GM12878 (cell line): ENCODE measurements at regions of chr6 and their contacts with region 1.

Region 1: DNA sequence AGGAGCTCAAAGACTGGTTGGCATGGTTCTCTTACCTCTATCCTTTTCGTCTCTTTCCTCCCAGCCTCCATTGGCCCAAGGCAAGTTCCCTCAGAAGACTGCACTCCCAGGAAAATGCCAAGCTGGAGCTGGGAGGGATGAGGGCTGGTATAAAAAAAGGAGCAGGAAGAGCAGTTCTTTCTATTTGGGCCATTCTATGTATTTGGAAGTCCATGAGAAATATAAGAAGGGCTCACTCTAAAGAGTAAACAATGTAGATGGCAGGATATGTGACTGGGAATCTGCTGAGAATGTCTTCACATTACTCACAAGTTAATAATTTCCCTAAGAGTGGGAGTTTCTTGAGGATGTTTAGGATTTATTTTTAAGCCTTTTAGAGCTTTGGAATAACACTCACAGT is 36.6 kb upstream of the ADTRP start:
- DNase-seq: no peak
- ATAC-seq: no peak
- H3K4me3 ChIP-seq: no peak overlapping the region
- H3K27ac ChIP-seq: no peak overlapping the region; the same call in 1 of the 2 replicates
- H3K4me1 ChIP-seq: peaks cover 15% of the 10 kb centered on the region; the same call in 1 of the 2 replicates
- H3K27me3 ChIP-seq: no peaks in the 10 kb centered on the region
- CTCF ChIP-seq: no peak
- EP300 ChIP-seq: no peak
- POLR2A ChIP-seq: no peak
- RAD21 ChIP-seq: no peak

Region 2: DNA sequence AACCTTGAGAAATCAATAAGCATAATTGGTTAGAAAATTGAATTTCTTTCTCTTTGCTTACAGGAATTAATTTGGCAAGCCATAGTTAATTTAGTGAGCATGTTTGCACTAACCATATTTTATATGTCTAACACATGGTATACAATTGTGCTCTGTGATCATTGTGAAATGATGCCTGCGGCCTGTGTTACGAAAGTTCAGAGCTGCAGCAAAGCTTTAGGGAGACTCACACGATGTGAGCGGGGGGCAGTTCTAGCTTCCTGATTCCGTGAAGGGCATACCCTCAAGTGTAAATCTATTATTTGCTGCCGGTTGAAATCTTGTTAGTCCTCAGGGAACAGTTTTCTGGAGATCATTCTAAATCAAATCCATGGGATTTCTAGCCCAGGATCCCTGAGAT is 11.1 kb before region 1 on chr6:
- CTCF ChIA-PET with region 1: interaction called, 4 read pairs
- POLR2A ChIA-PET with region 1: interaction called, 4 read pairs
- RAD21 ChIA-PET with region 1: no interaction called
- SMC1A ChIA-PET with region 1: interaction called, 10 read pairs
- in situ Hi-C with region 1: no loop called
- intact Hi-C with region 1: no loop called
- DNase-seq: no peak
- ATAC-seq: no peak
- H3K4me3 ChIP-seq: no peak overlapping the region
- H3K27ac ChIP-seq: no peak overlapping the region
- H3K4me1 ChIP-seq: peaks cover 6% of the 10 kb centered on the region; the same call in 1 of the 2 replicates
- H3K27me3 ChIP-seq: no peaks in the 10 kb centered on the region
- CTCF ChIP-seq: no peak
- EP300 ChIP-seq: no peak
- POLR2A ChIP-seq: no peak
- RAD21 ChIP-seq: no peak

Region 3: DNA sequence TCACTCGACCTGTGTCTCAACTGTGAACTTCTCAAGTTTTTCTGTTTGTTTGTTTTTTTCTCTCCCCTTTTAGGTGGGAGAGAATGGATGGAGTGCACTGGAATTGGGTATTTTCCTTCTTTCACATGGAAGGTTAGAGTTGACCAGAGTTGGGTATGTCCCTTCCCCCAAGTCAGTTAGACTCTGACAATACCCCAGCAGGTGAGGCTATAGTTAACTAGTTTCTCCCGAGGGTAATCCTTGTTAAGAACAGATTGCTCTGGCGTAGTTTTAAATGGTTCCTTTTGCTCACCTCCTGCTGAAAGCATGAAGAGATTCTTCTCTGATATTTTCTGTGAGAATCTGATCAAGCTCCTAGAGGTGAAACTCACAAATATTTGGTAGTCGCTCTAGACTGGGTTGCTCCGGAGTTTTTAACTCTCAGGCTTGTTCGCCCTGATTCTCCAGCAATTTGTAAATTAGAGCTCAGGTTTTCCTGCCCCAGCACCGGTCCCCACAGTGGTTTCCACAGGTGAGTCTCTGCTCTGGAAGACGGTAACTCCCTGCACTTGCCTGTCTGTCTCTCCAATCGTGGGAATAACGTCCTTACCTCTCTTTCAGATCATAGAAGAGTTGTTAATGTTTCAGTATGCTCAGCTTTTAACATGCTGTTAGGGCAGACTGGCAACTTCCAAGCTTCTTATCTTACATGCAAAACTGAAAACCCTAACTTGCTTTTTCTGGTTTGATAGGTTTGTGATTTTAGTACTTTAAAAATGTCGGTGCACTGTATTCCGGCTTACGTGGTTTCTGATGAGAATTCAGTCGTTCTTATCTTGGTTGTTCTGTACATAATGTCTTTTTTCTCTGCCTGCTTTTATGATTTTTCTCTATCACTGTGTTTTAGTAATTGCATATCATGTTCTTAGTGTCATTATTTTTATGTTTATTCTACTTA is 85.7 kb after region 1 on chr6:
- CTCF ChIA-PET with region 1: no interaction called
- POLR2A ChIA-PET with region 1: no interaction called
- RAD21 ChIA-PET with region 1: no interaction called
- SMC1A ChIA-PET with region 1: no interaction called
- in situ Hi-C with region 1: no loop called
- intact Hi-C with region 1: no loop called
- DNase-seq: no peak
- ATAC-seq: no peak
- H3K4me3 ChIP-seq: 0 out of 2 replicates have a peak overlapping the region, but pooled peaks have one; percentile 5
- H3K27ac ChIP-seq: no peak overlapping the region
- H3K4me1 ChIP-seq: no peaks in the 10 kb centered on the region
- H3K27me3 ChIP-seq: no peaks in the 10 kb centered on the region
- CTCF ChIP-seq: no peak
- EP300 ChIP-seq: no peak
- POLR2A ChIP-seq: no peak
- RAD21 ChIP-seq: no peak

Region 4: GRCh38 chr6:11938285-11938890 is 123.2 kb after region 1 on chr6:
- CTCF ChIA-PET with region 1: no interaction called
- POLR2A ChIA-PET with region 1: no interaction called
- RAD21 ChIA-PET with region 1: no interaction called
- SMC1A ChIA-PET with region 1: no interaction called
- in situ Hi-C with region 1: no loop called
- intact Hi-C with region 1: no loop called
- DNase-seq: no peak
- ATAC-seq: no peak
- H3K4me3 ChIP-seq: no peak overlapping the region
- H3K27ac ChIP-seq: no peak overlapping the region
- H3K4me1 ChIP-seq: no peaks in the 10 kb centered on the region; the same call in 1 of the 2 replicates
- H3K27me3 ChIP-seq: no peaks in the 10 kb centered on the region
- CTCF ChIP-seq: no peak
- EP300 ChIP-seq: no peak
- POLR2A ChIP-seq: no peak
- RAD21 ChIP-seq: no peak

Region 5: DNA sequence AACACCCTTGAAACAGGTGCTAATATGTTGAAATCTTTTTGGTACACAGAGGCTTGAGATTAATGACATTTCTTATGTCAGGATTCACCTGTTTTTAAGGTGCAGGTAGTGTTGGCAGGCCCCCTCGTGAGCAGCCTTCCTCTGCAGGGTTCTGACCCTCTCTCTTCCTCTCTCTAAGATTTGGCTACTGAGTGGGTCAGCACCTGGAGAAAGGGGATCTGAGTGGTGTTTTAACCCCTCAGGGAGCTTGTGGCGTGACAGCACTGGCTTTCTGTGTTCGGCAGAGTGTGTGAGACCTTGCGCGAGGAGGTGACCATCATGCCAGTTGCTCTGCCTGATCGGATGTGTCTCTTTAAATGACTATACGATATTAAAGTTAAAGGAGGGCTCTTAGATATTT is 233.9 kb after region 1 on chr6:
- CTCF ChIA-PET with region 1: no interaction called
- POLR2A ChIA-PET with region 1: no interaction called
- RAD21 ChIA-PET with region 1: no interaction called
- SMC1A ChIA-PET with region 1: no interaction called
- in situ Hi-C with region 1: no loop called
- intact Hi-C with region 1: no loop called
- DNase-seq: no peak
- ATAC-seq: peak; percentile 61
- H3K4me3 ChIP-seq: peak overlapping the region; percentile 26
- H3K27ac ChIP-seq: peak overlapping the region; percentile 95
- H3K4me1 ChIP-seq: peaks cover 55% of the 10 kb centered on the region
- H3K27me3 ChIP-seq: no peaks in the 10 kb centered on the region
- CTCF ChIP-seq: no peak
- EP300 ChIP-seq: peak; percentile 59 to 62; a peak in 1 of 4 replicates
- POLR2A ChIP-seq: peak; percentile 60
- RAD21 ChIP-seq: no peak